Activated CD4-positive, alpha-beta T cell treated with anti-CD3 and anti-CD28 coated beads for 36 hours (primary cell): ENCODE measurements at regions of chr4 and their contacts with region 1.

Region 1: DNA sequence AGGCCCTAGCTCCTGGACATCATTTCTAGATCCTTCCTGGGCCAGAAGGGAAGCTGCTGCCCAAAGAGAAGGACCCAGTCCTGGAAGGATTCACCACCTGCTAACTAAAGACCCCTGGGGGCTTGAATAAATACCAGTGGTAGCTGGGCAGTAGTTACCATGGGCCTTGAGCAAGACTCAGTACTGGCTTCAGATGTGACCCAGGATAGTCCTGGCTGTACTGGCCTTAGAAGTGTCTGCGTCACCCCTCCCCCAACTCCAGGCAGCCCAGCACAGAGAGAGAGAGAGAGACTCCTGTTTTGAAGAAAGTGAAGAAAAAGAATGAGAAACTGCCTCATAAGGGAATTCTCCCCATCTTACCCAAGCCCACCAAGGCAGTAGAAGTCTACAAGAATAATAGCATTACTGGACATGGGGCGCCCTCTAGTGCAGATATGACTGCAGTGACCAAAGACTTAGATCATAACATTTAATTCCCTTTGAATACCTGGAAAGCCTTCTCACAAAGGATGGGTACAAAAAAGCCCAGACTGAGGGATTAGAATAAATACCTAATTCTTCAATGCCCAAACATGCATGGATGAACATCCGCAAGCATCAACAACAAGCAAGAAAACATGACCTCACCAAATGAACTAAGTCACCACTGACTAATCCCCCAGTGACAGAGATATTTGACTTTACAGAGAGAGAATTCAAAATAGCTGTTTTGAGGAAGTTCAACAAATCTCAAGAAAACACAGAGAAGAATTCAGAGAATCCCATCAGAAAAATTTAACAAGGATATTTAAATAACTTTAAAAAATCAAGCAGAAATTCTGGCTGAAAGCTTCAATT is 171.8 kb downstream of the HNRNPD start:
- DNase-seq: peak; percentile 72
- ATAC-seq: peak; percentile 57
- H3K4me3 Mint-ChIP-seq: no peak overlapping the region
- H3K27ac Mint-ChIP-seq: no peak overlapping the region
- H3K4me1 Mint-ChIP-seq: peaks cover 3% of the 10 kb centered on the region
- H3K27me3 Mint-ChIP-seq: peaks cover 2% of the 10 kb centered on the region

Region 2: GRCh38 chr4:81844717-81845116 is 357.3 kb before region 1 on chr4:
- CTCF ChIA-PET with region 1: no interaction called
- POLR2A ChIA-PET with region 1: no interaction called
- intact Hi-C with region 1: loop called (anchors 1 to 10 kb)
- DNase-seq: peak; percentile 77
- ATAC-seq: peak; percentile 92
- H3K4me3 Mint-ChIP-seq: no peak overlapping the region
- H3K27ac Mint-ChIP-seq: no peak overlapping the region
- H3K4me1 Mint-ChIP-seq: peaks cover 7% of the 10 kb centered on the region
- H3K27me3 Mint-ChIP-seq: no peaks in the 10 kb centered on the region

Region 3: GRCh38 chr4:81913427-81913879 is 288.6 kb before region 1 on chr4:
- CTCF ChIA-PET with region 1: interaction called, 6 read pairs
- POLR2A ChIA-PET with region 1: no interaction called
- intact Hi-C with region 1: loop called in 1 of 2 experiments (anchors 5 kb)
- DNase-seq: peak; percentile 77
- ATAC-seq: peak; percentile 81
- H3K4me3 Mint-ChIP-seq: no peak overlapping the region
- H3K27ac Mint-ChIP-seq: no peak overlapping the region
- H3K4me1 Mint-ChIP-seq: peaks cover 7% of the 10 kb centered on the region
- H3K27me3 Mint-ChIP-seq: peaks cover 7% of the 10 kb centered on the region

Region 4: GRCh38 chr4:82123934-82124333 is 78.1 kb before region 1 on chr4:
- CTCF ChIA-PET with region 1: no interaction called
- POLR2A ChIA-PET with region 1: no interaction called
- intact Hi-C with region 1: loop called in 1 of 2 experiments (anchors 5 kb)
- DNase-seq: peak; percentile 15
- ATAC-seq: no peak
- H3K4me3 Mint-ChIP-seq: no peak overlapping the region
- H3K27ac Mint-ChIP-seq: no peak overlapping the region
- H3K4me1 Mint-ChIP-seq: peaks cover 10% of the 10 kb centered on the region
- H3K27me3 Mint-ChIP-seq: no peaks in the 10 kb centered on the region

Region 5: DNA sequence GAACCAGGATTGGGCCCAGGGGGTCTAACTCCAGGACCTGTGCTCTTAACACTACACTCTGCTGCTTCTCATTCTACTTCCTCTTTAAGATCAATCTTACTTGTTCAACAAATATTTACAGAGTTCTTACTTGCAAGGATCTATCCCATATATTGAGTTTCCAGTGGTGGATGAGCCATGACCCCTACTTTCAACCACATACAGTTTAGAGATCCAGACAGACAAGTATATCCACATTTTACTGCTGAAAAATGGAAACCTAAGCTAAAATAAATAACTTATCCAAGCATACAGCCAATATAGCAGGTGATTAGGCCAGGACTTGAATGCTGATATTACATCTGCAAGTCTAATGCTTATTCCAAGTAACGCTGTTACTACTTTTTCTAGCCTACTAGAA is 341.1 kb after region 1 on chr4:
- CTCF ChIA-PET with region 1: no interaction called
- POLR2A ChIA-PET with region 1: no interaction called
- intact Hi-C with region 1: no loop called
- DNase-seq: no peak
- ATAC-seq: no peak
- H3K4me3 Mint-ChIP-seq: no peak overlapping the region
- H3K27ac Mint-ChIP-seq: no peak overlapping the region
- H3K4me1 Mint-ChIP-seq: no peaks in the 10 kb centered on the region
- H3K27me3 Mint-ChIP-seq: peaks cover 8% of the 10 kb centered on the region